Endothelial cell of umbilical vein (primary cell): ENCODE measurements at regions of chr9 and their contacts with region 1.

Region 1: DNA sequence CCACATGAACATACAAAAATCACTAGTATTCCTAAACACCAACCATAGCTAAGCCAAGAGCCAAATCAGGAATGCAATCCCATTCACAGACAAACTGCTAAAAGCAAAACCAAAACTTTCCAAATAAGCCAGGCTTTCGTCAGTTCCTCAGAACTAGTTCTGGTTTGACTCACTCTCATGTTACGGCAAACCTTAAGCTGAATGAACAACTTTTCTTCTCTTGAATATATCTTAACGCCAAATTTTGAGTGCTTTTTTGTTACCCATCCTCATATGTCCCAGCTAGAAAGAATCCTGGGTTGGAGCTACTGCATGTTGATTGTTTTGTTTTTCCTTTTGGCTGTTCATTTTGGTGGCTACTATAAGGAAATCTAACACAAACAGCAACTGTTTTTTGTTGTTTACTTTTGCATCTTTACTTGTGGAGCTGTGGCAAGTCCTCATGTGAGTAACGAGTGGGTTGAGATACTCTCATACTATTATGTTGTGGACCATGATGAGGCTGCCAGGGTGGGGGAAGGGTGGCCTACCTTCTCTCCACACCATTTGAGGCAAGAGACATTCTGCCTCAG is at the start of gene PDCD1LG2:
- DNase-seq: peak; percentile 69
- H3K4me3 ChIP-seq: peak within 1 kb of the TSS; percentile 2 to 49 (median 7)
- H3K27ac ChIP-seq: peak within 1 kb of the TSS; percentile 95
- H3K4me1 ChIP-seq: peaks cover 47% of the 10 kb centered on the region
- H3K27me3 ChIP-seq: no peaks in the 10 kb centered on the region
- CTCF ChIP-seq: no peak
- POLR2A ChIP-seq: peak; percentile 79
- total RNA-seq, gene PDCD1LG2: 9.5 and 9.7 TPM in 2 replicates

Region 2: DNA sequence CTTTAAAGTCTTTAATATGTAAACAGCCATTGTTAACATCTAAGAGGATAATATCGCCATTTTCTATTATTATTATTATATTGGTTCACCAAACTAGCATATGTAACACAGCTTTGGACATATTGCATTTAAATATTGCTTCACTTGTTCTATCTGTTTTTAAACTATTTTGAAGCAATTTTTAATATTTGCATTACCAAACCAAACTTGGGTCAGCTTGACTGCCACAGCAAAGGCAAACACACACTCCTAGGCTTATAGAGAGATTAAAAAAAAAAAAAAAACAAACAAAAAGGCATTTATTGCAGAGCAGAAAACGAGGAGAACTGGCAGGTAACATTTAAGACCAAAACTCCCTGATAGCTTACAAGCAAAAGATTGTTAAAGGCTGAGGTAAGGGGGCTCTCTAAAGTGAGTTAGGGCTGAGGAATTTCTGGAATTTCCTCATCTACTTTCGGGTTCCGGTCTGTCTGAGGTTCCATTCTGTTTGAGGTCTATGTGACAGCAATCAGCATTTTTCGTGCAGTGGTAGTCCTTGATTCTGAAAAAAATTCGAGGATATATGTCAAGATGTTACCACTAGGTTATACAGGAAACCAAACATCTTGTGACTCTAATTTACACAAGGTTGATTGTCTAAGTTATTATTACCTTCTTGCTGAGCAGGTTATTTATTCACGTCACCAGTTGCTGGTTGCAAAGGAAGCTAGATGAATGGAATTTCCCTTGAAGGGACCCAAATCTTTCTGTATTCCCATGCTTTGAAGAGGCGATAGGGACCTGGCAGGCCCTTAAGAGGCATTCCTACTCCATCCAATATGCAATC is 241.3 kb before region 1 on chr9:
- CTCF ChIA-PET with region 1: no interaction called
- POLR2A ChIA-PET with region 1: no interaction called
- dilution Hi-C with region 1: no loop called
- intact Hi-C with region 1: loop called (anchors 1 kb)
- DNase-seq: peak; percentile 90
- H3K4me3 ChIP-seq: no peak overlapping the region
- H3K27ac ChIP-seq: peak overlapping the region; percentile 99
- H3K4me1 ChIP-seq: peaks cover 24% of the 10 kb centered on the region
- H3K27me3 ChIP-seq: no peaks in the 10 kb centered on the region
- CTCF ChIP-seq: no peak
- POLR2A ChIP-seq: no peak

Region 3: GRCh38 chr9:5408596-5408995 is 101.8 kb before region 1 on chr9:
- CTCF ChIA-PET with region 1: no interaction called
- POLR2A ChIA-PET with region 1: no interaction called
- dilution Hi-C with region 1: no loop called
- intact Hi-C with region 1: no loop called
- DNase-seq: no peak
- H3K4me3 ChIP-seq: no peak overlapping the region
- H3K27ac ChIP-seq: no peak overlapping the region
- H3K4me1 ChIP-seq: no peaks in the 10 kb centered on the region
- H3K27me3 ChIP-seq: no peaks in the 10 kb centered on the region
- CTCF ChIP-seq: no peak
- POLR2A ChIP-seq: no peak

Region 4: DNA sequence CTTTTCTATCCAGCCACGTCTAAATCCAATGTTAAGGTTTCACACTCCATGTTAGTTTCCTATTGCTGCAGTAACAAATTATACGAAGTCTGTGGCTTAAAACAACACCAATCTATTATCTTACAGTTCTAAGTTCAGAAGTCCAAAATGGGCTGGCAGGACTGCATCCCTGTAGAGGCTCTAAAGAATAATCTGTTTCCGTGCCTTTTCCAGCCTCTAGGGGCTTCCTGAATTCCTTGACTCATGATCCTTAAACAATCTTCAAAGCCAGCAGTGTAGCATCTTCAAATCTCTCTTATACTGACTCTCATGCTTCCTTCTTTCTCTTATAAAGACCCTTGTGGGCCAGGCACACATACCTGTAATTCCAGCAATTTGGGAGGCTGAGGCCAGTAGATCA is 79.5 kb before region 1 on chr9:
- CTCF ChIA-PET with region 1: no interaction called
- POLR2A ChIA-PET with region 1: no interaction called
- dilution Hi-C with region 1: no loop called
- intact Hi-C with region 1: no loop called
- DNase-seq: no peak
- H3K4me3 ChIP-seq: no peak overlapping the region
- H3K27ac ChIP-seq: no peak overlapping the region
- H3K4me1 ChIP-seq: peaks cover 3% of the 10 kb centered on the region
- H3K27me3 ChIP-seq: no peaks in the 10 kb centered on the region
- CTCF ChIP-seq: no peak
- POLR2A ChIP-seq: no peak

Region 5: GRCh38 chr9:5450359-5451091 is 59.9 kb before region 1 on chr9 and contains the start of gene CD274:
- CTCF ChIA-PET with region 1: interaction called, 18 read pairs
- POLR2A ChIA-PET with region 1: interaction called, 9 read pairs
- dilution Hi-C with region 1: no loop called
- intact Hi-C with region 1: loop called (anchors 1 kb)
- DNase-seq: peak; percentile 92
- H3K4me3 ChIP-seq: peak within 1 kb of the TSS; percentile 38 to 98 (median 72)
- H3K27ac ChIP-seq: peak within 1 kb of the TSS; percentile 79
- H3K4me1 ChIP-seq: peaks cover 68% of the 10 kb centered on the region
- H3K27me3 ChIP-seq: no peaks in the 10 kb centered on the region
- CTCF ChIP-seq: peak; percentile 71 to 79
- POLR2A ChIP-seq: peak; percentile 82
- total RNA-seq, gene CD274: 26.8 and 29.7 TPM in 2 replicates

Region 6: DNA sequence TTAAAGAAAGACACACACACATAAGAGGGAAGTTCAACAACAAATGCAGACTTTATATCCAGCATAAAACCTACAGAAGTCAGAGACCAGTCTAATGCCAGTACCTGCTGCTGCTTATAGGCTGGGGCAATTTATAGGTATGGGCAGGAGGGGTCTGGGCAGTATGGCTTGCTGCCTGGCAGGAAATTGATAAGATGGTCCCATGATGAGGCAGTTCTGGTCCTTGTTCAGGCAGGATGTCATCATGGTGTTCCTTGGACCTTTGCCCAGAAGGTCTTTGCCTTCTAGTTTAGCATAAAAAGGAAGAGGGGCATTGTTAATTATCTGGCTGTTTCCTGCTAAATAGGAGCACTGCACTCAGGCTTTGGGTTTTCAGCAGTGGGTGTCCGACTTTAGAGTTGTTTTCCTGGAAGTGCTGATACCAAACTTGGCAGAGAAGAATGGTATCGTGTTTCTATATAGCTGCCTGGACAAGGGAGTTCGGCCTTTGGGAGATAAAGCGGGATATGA is 10.5 kb before region 1 on chr9:
- CTCF ChIA-PET with region 1: interaction called, 8 read pairs
- POLR2A ChIA-PET with region 1: interaction called, 25 read pairs
- dilution Hi-C with region 1: no loop called
- intact Hi-C with region 1: loop called (anchors 1 kb)
- DNase-seq: peak; percentile 97
- H3K4me3 ChIP-seq: no peak overlapping the region
- H3K27ac ChIP-seq: peak overlapping the region; percentile 89
- H3K4me1 ChIP-seq: peaks cover 33% of the 10 kb centered on the region
- H3K27me3 ChIP-seq: no peaks in the 10 kb centered on the region
- CTCF ChIP-seq: no peak
- POLR2A ChIP-seq: peak; percentile 95

Region 7: DNA sequence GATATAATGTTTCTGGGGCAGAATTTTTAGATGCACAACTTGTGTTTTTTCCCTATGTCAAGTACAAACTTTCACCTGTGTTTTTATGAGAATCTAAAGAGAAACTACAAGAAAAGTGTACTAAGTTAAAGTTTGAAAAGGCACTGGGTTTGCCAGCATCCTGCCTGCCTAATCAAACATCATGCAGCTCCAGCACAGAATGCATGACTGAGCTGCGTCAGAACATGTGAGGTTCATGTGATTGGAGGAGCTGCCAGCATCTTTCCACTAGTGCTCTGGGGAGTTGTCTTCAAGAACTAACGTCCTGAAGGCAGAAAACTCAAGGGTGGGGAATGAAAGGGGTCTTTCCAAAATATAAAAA is 72.4 kb after region 1 on chr9:
- CTCF ChIA-PET with region 1: interaction called, 10 read pairs
- POLR2A ChIA-PET with region 1: interaction called, 6 read pairs
- dilution Hi-C with region 1: no loop called
- intact Hi-C with region 1: loop called (anchors 2 kb)
- DNase-seq: no peak
- H3K4me3 ChIP-seq: no peak overlapping the region
- H3K27ac ChIP-seq: peak overlapping the region; percentile 10
- H3K4me1 ChIP-seq: peaks cover 36% of the 10 kb centered on the region
- H3K27me3 ChIP-seq: no peaks in the 10 kb centered on the region
- CTCF ChIP-seq: no peak
- POLR2A ChIP-seq: no peak